KBM-7 (cell line): ENCODE measurements at regions of chrX and their contacts with region 1.

Region 1: GRCh38 chrX:42020225-42020624 is 96.9 kb upstream of the CASK start:
- DNase-seq: no peak

Region 2: DNA sequence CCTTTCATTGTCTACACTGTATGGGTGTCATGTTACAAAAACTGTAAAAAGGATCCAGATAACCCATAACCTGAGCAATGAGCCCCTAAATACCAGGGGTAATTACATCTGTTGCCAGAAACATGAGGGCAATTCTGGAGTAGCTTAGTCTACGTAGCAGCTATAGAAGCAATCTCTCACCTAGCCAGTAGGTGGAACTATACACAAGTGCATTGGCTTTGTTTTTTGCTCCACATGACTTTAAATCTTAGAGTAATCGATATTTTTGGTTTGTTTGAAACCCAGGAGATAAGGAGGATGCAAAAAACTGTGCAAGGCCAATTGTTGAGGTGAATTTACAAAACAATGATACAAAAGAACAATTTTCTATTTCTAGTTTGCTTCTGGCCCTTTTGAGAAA is 238.7 kb before region 1 on chrX:
- in situ Hi-C with region 1: loop called (anchors 25 kb)
- DNase-seq: peak; percentile 62

Region 3: DNA sequence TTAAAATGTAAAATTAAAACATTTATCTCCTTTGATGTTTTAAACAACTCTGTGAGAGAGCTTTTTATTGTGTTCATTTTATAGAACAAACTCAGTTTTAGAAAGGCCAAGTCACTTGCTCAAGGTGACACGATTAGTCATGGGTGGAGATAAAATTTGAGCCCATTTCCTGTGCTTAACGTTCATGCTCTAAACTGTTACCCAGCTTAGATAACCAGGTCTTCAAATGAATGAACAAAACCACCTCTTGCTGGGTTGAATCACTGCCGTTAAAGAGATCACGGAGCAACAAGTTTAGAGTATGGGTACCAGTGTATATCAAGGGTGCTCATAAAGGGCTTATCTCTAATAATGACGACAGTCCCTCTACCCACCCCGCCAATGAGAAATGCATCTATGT is 86.7 kb before region 1 on chrX:
- in situ Hi-C with region 1: no loop called
- DNase-seq: no peak